ENCODE measurements at regions of chr16 and their contacts with region 1.

Region 1: GRCh38 chr16:87487361-87488001 is 5.3 kb downstream of the ZCCHC14 start:
- DNase-seq: no peak
- ATAC-seq: no peak
- H3K4me3 ChIP-seq: no peak overlapping the region
- H3K27ac ChIP-seq: peak overlapping the region in 1 of 4 donors; percentile 53
- H3K4me1 ChIP-seq: peaks cover 81 to 83% of the 10 kb centered on the region in 2 donors
- H3K27me3 ChIP-seq: no peaks in the 10 kb centered on the region
- CTCF ChIP-seq: no peak
- POLR2A ChIP-seq: no peak

Region 2: DNA sequence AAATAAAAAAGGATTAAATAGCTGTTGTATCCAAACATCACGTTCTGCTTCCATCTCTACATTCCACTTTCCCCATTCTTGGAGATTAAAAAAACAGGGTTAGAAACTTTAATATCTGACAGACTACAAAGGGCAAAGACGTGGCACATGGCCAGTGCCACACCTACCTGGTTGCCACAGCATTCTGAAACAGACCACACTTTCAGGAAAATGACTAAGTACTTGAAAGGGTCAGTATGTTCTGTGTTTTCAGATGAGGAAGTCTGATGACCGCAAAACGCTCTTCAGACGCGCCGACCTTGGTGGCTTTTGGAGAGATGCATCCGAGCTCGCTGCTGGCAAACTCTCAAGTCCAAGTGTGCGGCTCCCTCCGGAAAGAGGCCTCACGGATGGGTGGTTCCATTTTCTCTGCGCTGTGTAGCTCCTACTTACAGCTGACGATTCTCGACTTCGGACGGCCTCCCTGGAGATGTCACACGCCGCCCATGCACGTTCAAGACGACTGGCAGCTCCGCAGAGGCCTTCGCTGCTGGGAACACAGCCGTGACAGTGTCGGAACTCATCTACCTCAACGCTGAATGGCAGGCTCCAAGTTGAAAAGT is 79.9 kb before region 1 on chr16:
- in situ Hi-C with region 1: no loop called
- intact Hi-C with region 1: loop called (anchors 5 kb)
- DNase-seq: peak; percentile 26 to 50
- ATAC-seq: peak; percentile 57 to 64
- H3K4me3 ChIP-seq: no peak overlapping the region
- H3K27ac ChIP-seq: peak overlapping the region; percentile 45 to 53 (median 50)
- H3K4me1 ChIP-seq: no peaks in the 10 kb centered on the region
- H3K27me3 ChIP-seq: no peaks in the 10 kb centered on the region
- CTCF ChIP-seq: no peak
- POLR2A ChIP-seq: peak in 1 of 2 donors; percentile 18